Activated T-helper 1 cell treated with anti-CD3 and anti-CD28 coated beads, Interleukin-12 subunit alpha, Interleukin-12 subunit beta, Interleukin-2, Interleukin-4 antibody, amounts not matched to agents 30 ng/mL and 10 ng/mL and 1 ng/mL, durations not matched to agents 14 hours and 24 hours and 36 hours (primary cell): ENCODE measurements at regions of chr18 and their contacts with region 1.

Region 1: GRCh38 chr18:79523736-79524180 is 128.0 kb downstream of the NFATC1 start:
- DNase-seq: peak; percentile 55
- H3K4me3 Mint-ChIP-seq: peak overlapping the region; percentile 79
- H3K27ac Mint-ChIP-seq: peak overlapping the region; percentile 98
- H3K4me1 Mint-ChIP-seq: peaks cover 64% of the 10 kb centered on the region
- H3K27me3 Mint-ChIP-seq: peaks cover 2% of the 10 kb centered on the region

Region 2: DNA sequence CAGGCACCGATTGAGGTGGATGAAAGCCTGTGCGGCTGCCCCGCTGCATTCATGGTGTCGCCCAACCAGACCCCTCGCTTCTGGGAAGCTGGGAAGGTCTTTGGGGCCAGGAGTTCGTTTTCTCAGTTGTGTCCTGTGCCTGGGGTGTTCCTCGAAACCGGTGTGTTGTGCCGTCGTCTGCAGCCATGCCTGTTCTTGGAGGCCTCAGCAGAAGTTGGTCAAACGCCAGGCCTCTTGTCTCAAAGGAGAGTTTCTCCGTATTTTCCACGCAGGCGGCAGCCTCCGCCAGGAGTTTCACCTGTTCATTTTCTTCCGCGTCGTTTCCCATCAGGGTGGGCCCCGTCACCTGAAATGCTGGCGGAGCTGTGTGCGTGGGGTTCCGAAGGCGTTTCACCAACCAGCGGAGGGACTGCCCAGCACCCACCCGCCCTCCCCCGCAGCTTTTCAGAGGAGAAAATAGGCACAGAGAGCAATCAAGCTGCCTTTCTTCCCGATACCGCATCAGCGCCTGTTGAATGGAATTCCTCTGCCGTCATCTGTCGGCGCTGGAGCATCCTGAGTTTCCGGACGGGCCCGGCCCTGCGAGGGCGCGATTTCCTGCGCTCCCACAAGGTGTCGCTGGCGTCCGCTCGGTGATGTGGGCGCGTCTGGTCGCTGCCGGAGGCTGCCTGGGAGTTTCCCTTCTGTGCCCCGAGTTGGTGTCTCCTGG is 145.1 kb before region 1 on chr18:
- intact Hi-C with region 1: loop called (anchors 1 kb)
- DNase-seq: peak; percentile 76
- H3K4me3 Mint-ChIP-seq: no peak overlapping the region
- H3K27ac Mint-ChIP-seq: no peak overlapping the region
- H3K4me1 Mint-ChIP-seq: peaks cover 14% of the 10 kb centered on the region
- H3K27me3 Mint-ChIP-seq: no peaks in the 10 kb centered on the region

Region 3: DNA sequence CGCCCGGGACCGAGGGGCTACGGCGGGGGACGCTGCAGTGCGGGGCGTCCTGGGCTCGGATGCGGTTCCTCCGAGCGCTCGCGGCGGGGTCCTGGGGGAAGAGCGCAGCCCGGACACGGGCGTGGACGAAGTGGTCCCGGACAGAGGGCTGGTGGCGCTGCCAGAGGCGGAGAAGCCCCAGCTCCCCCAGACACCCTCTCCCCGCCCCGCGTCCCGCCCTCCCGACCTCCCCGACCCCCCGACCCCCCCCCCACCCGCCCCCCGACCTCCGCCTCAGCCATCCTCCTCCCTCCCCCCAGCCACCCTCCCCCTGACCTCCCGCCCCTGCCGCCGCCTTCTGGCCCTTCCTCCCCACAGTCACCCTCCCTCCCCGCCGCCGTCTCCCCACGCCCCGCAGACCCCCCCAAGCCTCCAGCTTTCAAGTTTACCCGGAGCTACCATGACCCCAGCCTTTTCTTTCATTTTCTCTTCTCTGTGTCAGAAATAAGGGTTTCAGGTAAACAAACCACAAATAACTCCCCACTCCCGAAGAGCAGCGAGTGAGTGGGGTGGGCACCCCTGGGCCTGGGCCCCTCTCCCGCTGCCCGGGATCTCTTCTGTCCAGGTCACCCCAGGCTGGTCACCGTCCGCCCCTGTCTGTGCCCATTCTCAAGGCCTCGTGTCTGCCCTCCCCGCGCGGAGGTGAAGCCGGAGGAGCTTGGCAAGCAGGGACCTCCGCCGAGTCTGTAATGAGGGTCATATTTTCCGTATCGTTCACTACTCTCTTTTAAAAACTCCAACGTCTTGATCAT is 123.0 kb before region 1 on chr18:
- intact Hi-C with region 1: loop called (anchors 1 kb)
- DNase-seq: peak; percentile 34
- H3K4me3 Mint-ChIP-seq: peak overlapping the region; percentile 84
- H3K27ac Mint-ChIP-seq: peak overlapping the region; percentile 96
- H3K4me1 Mint-ChIP-seq: peaks cover 61% of the 10 kb centered on the region
- H3K27me3 Mint-ChIP-seq: no peaks in the 10 kb centered on the region

Region 4: GRCh38 chr18:79439201-79440023 is 84.3 kb before region 1 on chr18:
- intact Hi-C with region 1: loop called (anchors 1 kb)
- DNase-seq: no peak
- H3K4me3 Mint-ChIP-seq: no peak overlapping the region
- H3K27ac Mint-ChIP-seq: peak overlapping the region; percentile 48
- H3K4me1 Mint-ChIP-seq: peaks cover 9% of the 10 kb centered on the region
- H3K27me3 Mint-ChIP-seq: no peaks in the 10 kb centered on the region

Region 5: GRCh38 chr18:79496978-79497637 is 26.6 kb before region 1 on chr18:
- intact Hi-C with region 1: no loop called
- DNase-seq: no peak
- H3K4me3 Mint-ChIP-seq: no peak overlapping the region
- H3K27ac Mint-ChIP-seq: peak overlapping the region; percentile 23
- H3K4me1 Mint-ChIP-seq: peaks cover 3% of the 10 kb centered on the region
- H3K27me3 Mint-ChIP-seq: no peaks in the 10 kb centered on the region

Region 6: GRCh38 chr18:79679111-79679872 is 155.5 kb after region 1 on chr18 and contains the start of gene CTDP1:
- intact Hi-C with region 1: loop called (anchors 1 kb)
- DNase-seq: peak; percentile 97
- H3K4me3 Mint-ChIP-seq: peak within 1 kb of the TSS; percentile 94
- H3K27ac Mint-ChIP-seq: peak within 1 kb of the TSS; percentile 99
- H3K4me1 Mint-ChIP-seq: peaks cover 59% of the 10 kb centered on the region
- H3K27me3 Mint-ChIP-seq: no peaks in the 10 kb centered on the region
- total RNA-seq, gene CTDP1: 45.9 and 47.2 TPM in 2 replicates

Region 7: GRCh38 chr18:80202264-80202998 is 678.7 kb after region 1 on chr18:
- intact Hi-C with region 1: loop called (anchors 2 kb)
- DNase-seq: no peak
- H3K4me3 Mint-ChIP-seq: no peak overlapping the region
- H3K27ac Mint-ChIP-seq: no peak overlapping the region
- H3K4me1 Mint-ChIP-seq: peaks cover 8% of the 10 kb centered on the region
- H3K27me3 Mint-ChIP-seq: peaks cover 20% of the 10 kb centered on the region